Sciatic nerve (tissue), 2 donors: ENCODE measurements at regions of chr19 and their contacts with region 1.

Region 1: DNA sequence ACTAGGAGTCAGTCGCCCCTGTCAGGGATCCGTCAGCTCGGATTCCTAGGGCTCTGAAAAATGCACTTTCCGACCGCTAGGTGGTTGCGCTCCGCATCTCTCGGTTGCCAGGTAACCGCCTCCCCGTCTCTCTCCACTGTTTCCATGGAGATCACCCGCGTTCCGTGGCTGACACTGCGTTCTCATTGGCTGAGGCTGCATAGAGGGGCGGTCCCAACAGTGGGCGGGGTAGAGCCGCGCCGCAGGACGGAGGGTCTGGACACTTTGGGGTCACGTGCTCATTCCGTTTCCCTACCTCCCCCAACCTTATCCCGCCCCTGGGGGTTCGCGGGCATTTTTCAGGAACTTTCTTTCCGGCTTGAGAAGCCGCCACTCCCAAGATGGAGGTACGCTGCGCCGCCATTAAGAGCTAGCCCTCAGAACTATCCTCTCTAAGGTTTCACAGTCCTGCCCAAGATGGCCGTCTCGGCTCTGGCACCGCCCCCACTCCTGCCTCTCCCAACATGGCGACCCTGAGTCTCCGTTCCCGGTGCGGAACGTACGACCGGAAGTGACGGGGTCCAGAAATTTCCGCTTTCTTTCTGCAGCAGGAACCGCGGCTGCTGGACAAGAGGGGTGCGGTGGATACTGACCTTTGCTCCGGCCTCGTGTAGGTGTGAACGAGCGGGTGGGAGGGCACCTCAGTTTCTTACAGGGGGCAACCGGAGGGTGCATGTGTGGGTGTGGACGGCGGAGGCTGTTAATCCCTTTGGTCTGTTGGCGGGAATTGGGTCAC is at the starts of genes ODAD3 and PRKCSH:
- DNase-seq: peak; percentile 99
- ATAC-seq: peak; percentile 98
- total RNA-seq, gene ODAD3: 0.31 TPM
- total RNA-seq, gene PRKCSH: 190 TPM

Region 2: DNA sequence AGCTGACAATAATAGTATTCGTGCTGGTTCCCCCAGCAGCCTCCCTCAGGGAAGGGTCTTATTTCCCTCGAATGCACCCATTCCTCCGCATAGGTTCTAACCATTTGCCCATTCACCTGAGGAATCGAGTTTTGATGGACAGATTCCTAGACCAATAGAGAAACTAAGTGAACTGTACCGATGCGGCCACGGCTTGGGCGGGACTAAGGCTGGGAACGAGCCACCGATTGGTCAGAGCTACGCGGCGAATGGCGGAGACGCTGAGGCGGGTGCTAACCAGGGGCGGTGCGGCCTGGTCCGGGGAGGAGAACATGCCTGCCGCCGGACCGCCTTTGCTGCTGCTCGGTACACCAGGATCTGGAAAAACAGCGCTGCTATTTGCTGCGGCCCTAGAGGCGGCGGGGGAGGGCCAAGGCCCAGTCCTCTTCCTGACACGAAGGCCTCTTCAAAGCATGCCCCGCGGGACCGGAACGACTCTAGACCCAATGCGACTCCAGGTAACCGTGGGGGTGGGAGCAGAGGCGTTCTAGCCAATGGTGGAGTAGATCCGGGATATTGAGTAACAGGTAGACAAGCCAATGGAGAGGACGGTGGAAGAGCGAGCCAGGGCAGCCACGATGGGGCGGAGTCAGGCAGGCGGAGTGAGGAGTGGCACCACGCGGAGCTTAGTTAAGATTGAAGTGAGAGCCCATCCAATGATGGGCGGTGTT is 60.7 kb before region 1 on chr19 and contains the start of gene SWSAP1:
- intact Hi-C with region 1: loop called (anchors 10 kb)
- DNase-seq: peak; percentile 98
- ATAC-seq: peak; percentile 98
- total RNA-seq, gene SWSAP1: 1.3 TPM

Region 3: GRCh38 chr19:11496391-11497163 is 61.3 kb after region 1 on chr19:
- intact Hi-C with region 1: no loop called
- DNase-seq: peak; percentile 80
- ATAC-seq: peak; percentile 63

Region 4: GRCh38 chr19:11551603-11552235 is 116.5 kb after region 1 on chr19:
- intact Hi-C with region 1: no loop called
- DNase-seq: no peak
- ATAC-seq: peak; percentile 41